Breast epithelium (tissue), 4 donors: ENCODE measurements at regions of chr2 and their contacts with region 1.

Region 1: GRCh38 chr2:23642516-23642915 is 257.5 kb downstream of the KLHL29 start:
- DNase-seq: no peak
- H3K4me3 ChIP-seq: no peak overlapping the region
- H3K27ac ChIP-seq: no peak overlapping the region
- H3K4me1 ChIP-seq: no peaks in the 10 kb centered on the region
- H3K27me3 ChIP-seq: no peaks in the 10 kb centered on the region
- CTCF ChIP-seq: no peak
- POLR2A ChIP-seq: no peak

Region 2: DNA sequence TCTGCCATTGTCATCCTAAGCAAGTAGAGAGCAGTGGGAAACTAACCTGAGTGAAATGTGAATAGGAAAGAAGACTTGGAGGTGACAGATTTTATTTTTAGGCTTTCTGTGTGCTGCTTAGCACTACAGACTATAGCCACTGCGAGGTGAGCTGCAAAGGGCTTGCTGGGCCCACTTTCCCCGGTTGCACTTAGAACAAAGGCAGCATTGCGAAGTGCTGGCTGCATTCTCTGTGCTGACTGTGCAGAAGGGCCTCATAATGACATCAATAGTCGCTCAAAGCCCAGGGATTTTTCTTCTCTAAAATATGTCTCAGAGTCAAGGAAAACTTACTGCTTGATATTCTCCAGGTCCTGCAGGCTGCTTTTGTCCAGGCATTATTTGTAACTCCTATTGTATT is 1926.6 kb before region 1 on chr2:
- intact Hi-C with region 1: no loop called
- DNase-seq: no peak
- H3K4me3 ChIP-seq: no peak overlapping the region
- H3K27ac ChIP-seq: no peak overlapping the region
- H3K4me1 ChIP-seq: no peaks in the 10 kb centered on the region
- H3K27me3 ChIP-seq: no peaks in the 10 kb centered on the region
- CTCF ChIP-seq: no peak
- POLR2A ChIP-seq: no peak

Region 3: DNA sequence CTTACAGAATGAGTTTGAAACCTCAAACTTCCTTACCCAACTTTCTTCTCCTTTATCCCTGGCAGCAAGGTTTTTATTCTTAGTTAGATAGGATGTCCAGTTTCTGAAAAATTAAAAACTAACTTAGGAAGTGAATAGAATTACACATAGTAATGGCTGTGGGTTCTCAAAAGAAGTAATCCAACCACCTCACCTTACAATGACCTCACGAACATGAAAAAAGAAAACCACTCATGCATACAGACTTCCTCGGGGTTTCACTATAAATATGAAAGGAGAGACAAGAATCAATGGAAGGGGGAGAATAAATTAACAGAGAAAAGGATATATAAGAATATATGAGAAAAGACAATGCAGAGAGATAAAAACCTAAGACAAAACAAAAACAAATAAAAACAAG is 1301.8 kb before region 1 on chr2:
- intact Hi-C with region 1: loop called (anchors 5 kb)
- DNase-seq: no peak
- H3K4me3 ChIP-seq: no peak overlapping the region
- H3K27ac ChIP-seq: no peak overlapping the region
- H3K4me1 ChIP-seq: no peaks in the 10 kb centered on the region
- H3K27me3 ChIP-seq: no peaks in the 10 kb centered on the region
- CTCF ChIP-seq: no peak
- POLR2A ChIP-seq: no peak